A549 (cell line): ENCODE measurements at regions of chr18 and their contacts with region 1.

Region 1: GRCh38 chr18:22032392-22032961 is 136.9 kb upstream of the GATA6 start:
- DNase-seq: peak; percentile 81 to 86
- ATAC-seq: peak; percentile 99 to 100
- H3K4me3 ChIP-seq: no peak overlapping the region
- H3K27ac ChIP-seq: peak overlapping the region in 1 of 2 experiments; percentile 76; a peak in 3 of 6 replicates
- H3K4me1 ChIP-seq: peaks cover 17% of the 10 kb centered on the region
- CTCF ChIP-seq: no peak
- EP300 ChIP-seq: no peak
- POLR2A ChIP-seq: no peak
- RAD21 ChIP-seq: no peak

Region 2: GRCh38 chr18:21997207-21998143 is 35.0 kb before region 1 on chr18:
- CTCF ChIA-PET with region 1: interaction called, 14 read pairs
- POLR2A ChIA-PET with region 1: no interaction called
- DNase-seq: peak; percentile 25 to 47
- ATAC-seq: peak in 1 of 2 experiments; percentile 72; a peak in 3 of 6 replicates
- H3K4me3 ChIP-seq: no peak overlapping the region
- H3K27ac ChIP-seq: peak overlapping the region in 1 of 2 experiments; percentile 45; a peak in 1 of 6 replicates
- H3K4me1 ChIP-seq: no peaks in the 10 kb centered on the region; the same call in 2 of the 3 replicates
- CTCF ChIP-seq: peak; percentile 63
- EP300 ChIP-seq: no peak
- POLR2A ChIP-seq: no peak
- RAD21 ChIP-seq: peak; percentile 31 to 39; a peak in 3 of 5 replicates